Heart right ventricle (tissue), 16 donors: ENCODE measurements at regions of chr21 and their contacts with region 1.

Region 1: DNA sequence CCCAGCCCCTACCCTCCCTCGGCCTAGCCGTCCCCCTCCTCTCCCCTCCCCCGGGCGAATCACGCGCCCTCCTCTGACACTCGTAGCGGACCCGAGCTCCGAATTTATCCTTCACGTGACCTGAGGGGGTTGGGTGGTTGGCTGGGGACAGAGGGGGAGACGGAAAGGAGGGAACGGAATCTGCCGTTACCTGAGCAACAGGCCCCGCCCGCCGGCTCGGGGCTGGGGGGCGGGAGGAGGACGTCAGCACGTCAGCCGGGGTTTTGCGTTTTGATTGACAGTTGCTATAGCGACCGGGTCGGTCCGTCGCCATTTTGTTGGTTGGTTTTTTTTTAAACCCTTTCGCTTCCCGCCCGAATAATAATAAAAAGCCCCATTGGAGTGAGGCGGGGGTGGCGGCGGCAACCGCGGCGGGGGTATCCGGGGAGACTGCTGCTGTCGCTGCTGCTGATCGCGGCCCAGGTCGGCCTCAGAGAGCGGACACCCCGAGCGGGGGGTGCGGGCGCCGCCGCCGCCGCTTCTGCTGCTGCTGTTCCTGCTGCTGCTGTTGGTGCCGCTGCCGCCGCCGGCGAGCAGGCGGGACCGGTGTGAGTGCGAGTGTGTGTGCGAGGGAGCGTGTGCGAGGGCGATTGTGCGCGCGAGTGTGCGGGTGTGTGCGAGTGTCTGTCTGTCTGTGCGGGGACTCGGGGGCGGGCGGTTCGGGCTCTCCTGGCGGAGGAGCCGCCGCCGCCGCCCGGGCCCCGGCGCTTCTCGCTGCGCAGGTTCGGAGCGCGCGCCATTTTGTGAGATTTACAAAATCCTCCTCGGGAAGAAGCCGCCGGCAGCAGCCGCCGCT is at the start of gene DYRK1A:
- DNase-seq: peak; percentile 98 to 100
- ATAC-seq: peak; percentile 92 to 98 (median 96)
- H3K4me3 ChIP-seq: peak within 1 kb of the TSS; percentile 74 to 98 (median 90)
- H3K27ac ChIP-seq: peak within 1 kb of the TSS; percentile 98 to 100 (median 100)
- H3K4me1 ChIP-seq: peaks cover 4 to 47% (median 43%) of the 10 kb centered on the region in 9 donors
- H3K27me3 ChIP-seq: no peaks in the 10 kb centered on the region
- CTCF ChIP-seq: peak in 1 of 9 donors; percentile 24
- total RNA-seq, gene DYRK1A: 57.6 to 94.2 (median 75.0) TPM

Region 2: DNA sequence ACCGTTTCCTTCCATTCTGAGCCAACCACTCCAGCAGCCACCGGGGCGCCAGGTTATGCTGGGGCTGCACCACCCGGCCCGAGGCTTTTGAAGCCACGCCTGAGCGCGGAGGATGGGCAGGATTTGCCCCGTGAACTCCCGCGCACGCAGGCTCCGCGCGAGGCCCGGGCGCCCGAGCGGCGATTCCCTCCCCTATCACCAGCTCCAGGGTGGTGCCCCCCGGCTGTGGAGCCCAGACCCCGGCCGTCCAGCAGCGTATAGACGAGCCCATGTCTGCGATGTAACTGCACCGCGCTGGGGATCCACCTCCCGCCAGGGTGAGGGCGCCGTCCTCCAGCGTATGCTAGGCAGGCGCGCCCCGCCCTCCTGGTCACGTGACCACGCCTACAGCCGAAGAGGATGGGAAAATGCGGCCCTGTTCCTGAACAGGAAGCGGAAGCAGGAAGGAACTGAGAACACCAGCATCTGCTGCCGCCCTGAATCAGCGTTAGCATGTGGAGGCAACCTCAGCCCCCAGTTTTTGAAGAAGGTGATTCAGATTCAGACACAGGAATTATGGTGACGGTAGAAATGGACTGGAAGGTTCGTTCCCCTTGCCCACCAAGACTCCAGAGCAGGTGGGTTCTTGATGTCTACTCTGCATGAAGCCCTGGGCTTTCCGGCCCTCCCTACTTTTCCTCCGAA is 145.6 kb before region 1 on chr21:
- intact Hi-C with region 1: loop called in 5 of 10 experiments (anchors 1 to 5 kb)
- DNase-seq: peak; percentile 95
- ATAC-seq: peak; percentile 95 to 98 (median 98)
- H3K4me3 ChIP-seq: peak overlapping the region; percentile 47 to 76 (median 64)
- H3K27ac ChIP-seq: peak overlapping the region; percentile 76 to 91 (median 85)
- H3K4me1 ChIP-seq: peaks cover 0 to 16% (median 9%) of the 10 kb centered on the region in 9 donors
- H3K27me3 ChIP-seq: no peaks in the 10 kb centered on the region
- CTCF ChIP-seq: peak in 7 of 9 donors; percentile 42 to 75 (median 66)

Region 3: GRCh38 chr21:37338671-37339551 is 27.8 kb before region 1 on chr21:
- intact Hi-C with region 1: loop called in 2 of 10 experiments (anchors 1 kb)
- DNase-seq: peak; percentile 37 to 69
- ATAC-seq: peak; percentile 88 to 98 (median 96)
- H3K4me3 ChIP-seq: peak overlapping the region in 1 of 10 donors; percentile 2
- H3K27ac ChIP-seq: peak overlapping the region; percentile 74 to 88 (median 81)
- H3K4me1 ChIP-seq: peaks cover 0 to 29% (median 16%) of the 10 kb centered on the region in 9 donors
- H3K27me3 ChIP-seq: no peaks in the 10 kb centered on the region
- CTCF ChIP-seq: no peak

Region 4: GRCh38 chr21:37435120-37435519 is 68.4 kb after region 1 on chr21:
- intact Hi-C with region 1: loop called in 2 of 10 experiments (anchors 5 kb)
- DNase-seq: peak in 1 of 2 donors; percentile 80
- ATAC-seq: peak; percentile 95 to 99 (median 98)
- H3K4me3 ChIP-seq: peak overlapping the region in 3 of 10 donors; percentile 3 to 28 (median 16)
- H3K27ac ChIP-seq: peak overlapping the region in 7 of 10 donors; percentile 18 to 72 (median 52)
- H3K4me1 ChIP-seq: peaks cover 4 to 95% (median 81%) of the 10 kb centered on the region in 9 donors
- H3K27me3 ChIP-seq: no peaks in the 10 kb centered on the region
- CTCF ChIP-seq: no peak

Region 5: GRCh38 chr21:37452227-37452626 is 85.5 kb after region 1 on chr21:
- intact Hi-C with region 1: loop called in 5 of 10 experiments (anchors 5 to 10 kb)
- DNase-seq: peak; percentile 24 to 65
- ATAC-seq: peak; percentile 68 to 93 (median 85)
- H3K4me3 ChIP-seq: no peak overlapping the region
- H3K27ac ChIP-seq: peak overlapping the region in 9 of 10 donors; percentile 14 to 75 (median 56)
- H3K4me1 ChIP-seq: peaks cover 15 to 100% (median 86%) of the 10 kb centered on the region in 9 donors
- H3K27me3 ChIP-seq: no peaks in the 10 kb centered on the region
- CTCF ChIP-seq: no peak

Region 6: GRCh38 chr21:37557261-37557950 is 190.7 kb after region 1 on chr21:
- intact Hi-C with region 1: loop called in 5 of 10 experiments (anchors 5 to 10 kb)
- DNase-seq: no peak
- ATAC-seq: no peak
- H3K4me3 ChIP-seq: peak overlapping the region in 3 of 10 donors; percentile 1 to 16 (median 14)
- H3K27ac ChIP-seq: peak overlapping the region in 8 of 10 donors; percentile 12 to 61 (median 38)
- H3K4me1 ChIP-seq: peaks cover 0 to 39% (median 17%) of the 10 kb centered on the region in 9 donors
- H3K27me3 ChIP-seq: no peaks in the 10 kb centered on the region
- CTCF ChIP-seq: no peak